ENCODE measurements at regions of chr22 and their contacts with region 1.

Region 1: GRCh38 chr22:18954990-18955571 is 19.0 kb upstream of the PRODH start:
- DNase-seq: peak in 2 of 5 donors; percentile 9 to 24
- H3K4me3 ChIP-seq: no peak overlapping the region
- H3K27ac ChIP-seq: no peak overlapping the region
- H3K4me1 ChIP-seq: no peaks in the 10 kb centered on the region
- H3K27me3 ChIP-seq: no peaks in the 10 kb centered on the region
- CTCF ChIP-seq: no peak
- EP300 ChIP-seq: no peak
- POLR2A ChIP-seq: no peak

Region 2: DNA sequence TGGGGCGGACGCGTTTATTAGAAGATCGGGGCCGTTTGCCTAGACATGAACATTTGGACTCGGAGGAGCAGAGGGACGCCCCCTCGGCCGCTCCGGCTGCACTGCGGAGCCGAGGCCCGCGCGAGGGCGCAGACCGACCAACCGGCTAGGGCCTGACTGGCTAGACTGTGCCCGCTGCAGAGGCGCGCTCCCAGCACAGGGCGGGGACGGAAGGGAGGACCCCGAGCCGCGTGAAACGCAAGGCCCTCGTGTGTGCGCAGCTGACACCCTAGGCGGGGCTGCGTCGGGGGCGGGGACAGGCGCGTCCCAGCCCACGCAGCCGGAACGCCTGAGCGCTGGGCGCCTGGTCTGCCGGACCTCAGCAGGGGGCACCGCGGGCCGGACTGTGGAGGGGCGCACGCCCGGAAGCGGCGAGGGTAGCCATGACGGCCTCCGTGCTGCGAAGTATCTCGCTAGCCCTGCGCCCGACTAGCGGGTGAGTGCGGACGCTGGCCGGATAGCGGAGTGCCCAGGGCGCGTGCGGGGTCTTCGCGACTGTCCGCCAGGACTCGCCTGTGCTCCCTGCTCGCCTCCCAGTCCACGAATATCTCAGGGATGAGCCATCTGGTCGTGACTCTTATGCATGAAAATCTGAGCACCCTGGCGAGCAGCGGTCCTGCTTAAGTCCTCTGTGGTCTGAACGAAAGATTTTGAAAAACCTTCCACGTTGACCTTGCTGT is 477.2 kb after region 1 on chr22 and contains the start of gene MRPL40:
- intact Hi-C with region 1: no loop called
- DNase-seq: peak; percentile 89 to 95 (median 93)
- H3K4me3 ChIP-seq: peak within 1 kb of the TSS; percentile 89
- H3K27ac ChIP-seq: peak within 1 kb of the TSS; percentile 70 to 88
- H3K4me1 ChIP-seq: peaks cover 10% of the 10 kb centered on the region
- H3K27me3 ChIP-seq: no peaks in the 10 kb centered on the region
- CTCF ChIP-seq: peak in 1 of 3 donors; percentile 22
- EP300 ChIP-seq: no peak
- POLR2A ChIP-seq: peak; percentile 91
- total RNA-seq, gene MRPL40: 21.1 to 31.0 (median 28.5) TPM

Region 3: GRCh38 chr22:19619144-19620009 is 664.3 kb after region 1 on chr22:
- intact Hi-C with region 1: loop called in 1 of 4 experiments (anchors 10 kb)
- DNase-seq: no peak
- H3K4me3 ChIP-seq: no peak overlapping the region
- H3K27ac ChIP-seq: no peak overlapping the region
- H3K4me1 ChIP-seq: no peaks in the 10 kb centered on the region
- H3K27me3 ChIP-seq: no peaks in the 10 kb centered on the region
- CTCF ChIP-seq: no peak
- EP300 ChIP-seq: no peak
- POLR2A ChIP-seq: no peak

Measured in ovary (tissue), 10 donors.